ENCODE measurements at regions of chr6 and their contacts with region 1.

Region 1: GRCh38 chr6:128062882-128063603 is 162.2 kb upstream of the THEMIS start:
- DNase-seq: peak; percentile 63 to 67
- H3K4me3 ChIP-seq: no peak overlapping the region
- H3K4me3 Mint-ChIP-seq: peak overlapping the region; percentile 43
- H3K27ac Mint-ChIP-seq: peak overlapping the region; percentile 89
- H3K4me1 ChIP-seq: peaks cover 35% of the 10 kb centered on the region
- H3K4me1 Mint-ChIP-seq: peaks cover 7% of the 10 kb centered on the region
- H3K27me3 ChIP-seq: no peaks in the 10 kb centered on the region
- H3K27me3 Mint-ChIP-seq: no peaks in the 10 kb centered on the region
- CTCF ChIP-seq: no peak

Region 2: DNA sequence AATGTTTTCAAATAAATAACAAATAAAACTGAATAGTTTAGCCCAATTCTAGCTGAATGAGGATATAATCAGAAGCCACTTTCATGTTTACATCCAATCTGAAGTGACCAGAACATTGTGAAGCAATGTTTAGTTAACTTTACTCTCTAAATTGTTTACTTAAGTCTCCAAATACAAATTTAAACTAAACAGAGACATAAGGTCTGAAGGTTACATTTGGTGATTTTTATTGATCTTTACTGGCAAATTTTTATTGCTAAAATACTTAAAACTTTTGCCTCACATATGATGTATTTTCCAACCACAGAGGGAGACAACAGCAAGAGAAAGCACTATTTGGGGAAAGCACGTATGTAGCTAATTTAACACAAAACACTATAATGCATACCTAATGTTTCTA is 55.4 kb before region 1 on chr6:
- CTCF ChIA-PET with region 1: no interaction called
- POLR2A ChIA-PET with region 1: no interaction called
- intact Hi-C with region 1: loop called (anchors 2 kb)
- DNase-seq: no peak
- H3K4me3 ChIP-seq: no peak overlapping the region
- H3K4me3 Mint-ChIP-seq: no peak overlapping the region
- H3K27ac Mint-ChIP-seq: no peak overlapping the region
- H3K4me1 ChIP-seq: no peaks in the 10 kb centered on the region
- H3K4me1 Mint-ChIP-seq: peaks cover 6% of the 10 kb centered on the region
- H3K27me3 ChIP-seq: no peaks in the 10 kb centered on the region
- H3K27me3 Mint-ChIP-seq: no peaks in the 10 kb centered on the region
- CTCF ChIP-seq: no peak

Region 3: DNA sequence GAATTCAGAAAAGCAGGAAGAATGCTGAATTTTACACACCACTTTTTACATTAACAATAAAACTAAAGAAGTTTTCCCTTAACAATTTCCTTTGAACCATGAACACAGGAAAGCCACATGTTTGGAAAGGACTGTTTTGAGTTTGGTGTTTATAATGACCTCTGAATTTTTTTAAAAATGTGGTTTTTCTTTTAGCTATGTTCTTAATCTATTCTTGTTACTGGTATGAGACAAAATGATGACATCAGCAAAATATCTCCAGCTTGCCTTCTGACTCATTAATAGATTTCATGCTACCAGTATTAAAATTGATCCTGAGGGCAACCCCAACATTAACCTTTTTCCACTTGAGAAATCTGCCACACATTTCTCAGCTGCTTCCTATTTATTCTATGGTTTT is 55.4 kb after region 1 on chr6:
- CTCF ChIA-PET with region 1: no interaction called
- POLR2A ChIA-PET with region 1: no interaction called
- intact Hi-C with region 1: no loop called
- DNase-seq: no peak
- H3K4me3 ChIP-seq: no peak overlapping the region
- H3K4me3 Mint-ChIP-seq: no peak overlapping the region
- H3K27ac Mint-ChIP-seq: no peak overlapping the region
- H3K4me1 ChIP-seq: no peaks in the 10 kb centered on the region
- H3K4me1 Mint-ChIP-seq: peaks cover 7% of the 10 kb centered on the region
- H3K27me3 ChIP-seq: no peaks in the 10 kb centered on the region
- H3K27me3 Mint-ChIP-seq: no peaks in the 10 kb centered on the region
- CTCF ChIP-seq: no peak

Region 4: DNA sequence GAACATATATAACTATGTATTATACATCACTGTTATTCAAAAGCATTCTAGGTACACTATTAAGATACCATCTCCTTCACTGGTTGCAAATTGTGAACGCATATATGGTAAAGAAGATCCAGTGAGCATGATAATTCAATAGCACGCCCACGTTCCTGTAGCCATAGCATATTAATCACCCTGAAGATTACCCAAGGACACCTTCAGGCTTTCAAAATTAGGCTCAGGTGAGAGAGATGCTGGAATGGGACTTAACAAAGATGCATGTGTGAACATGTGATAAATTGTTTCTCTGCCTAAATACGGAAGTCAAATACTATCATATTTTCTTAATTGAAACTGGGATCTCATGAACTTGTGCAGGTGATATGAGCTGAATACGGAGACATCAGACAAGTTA is 153.9 kb after region 1 on chr6:
- CTCF ChIA-PET with region 1: no interaction called
- POLR2A ChIA-PET with region 1: no interaction called
- intact Hi-C with region 1: loop called (anchors 1 kb)
- DNase-seq: no peak
- H3K4me3 ChIP-seq: no peak overlapping the region
- H3K4me3 Mint-ChIP-seq: no peak overlapping the region
- H3K27ac Mint-ChIP-seq: no peak overlapping the region
- H3K4me1 ChIP-seq: peaks cover 2% of the 10 kb centered on the region
- H3K4me1 Mint-ChIP-seq: peaks cover 4% of the 10 kb centered on the region
- H3K27me3 ChIP-seq: no peaks in the 10 kb centered on the region
- H3K27me3 Mint-ChIP-seq: no peaks in the 10 kb centered on the region
- CTCF ChIP-seq: no peak

Region 5: DNA sequence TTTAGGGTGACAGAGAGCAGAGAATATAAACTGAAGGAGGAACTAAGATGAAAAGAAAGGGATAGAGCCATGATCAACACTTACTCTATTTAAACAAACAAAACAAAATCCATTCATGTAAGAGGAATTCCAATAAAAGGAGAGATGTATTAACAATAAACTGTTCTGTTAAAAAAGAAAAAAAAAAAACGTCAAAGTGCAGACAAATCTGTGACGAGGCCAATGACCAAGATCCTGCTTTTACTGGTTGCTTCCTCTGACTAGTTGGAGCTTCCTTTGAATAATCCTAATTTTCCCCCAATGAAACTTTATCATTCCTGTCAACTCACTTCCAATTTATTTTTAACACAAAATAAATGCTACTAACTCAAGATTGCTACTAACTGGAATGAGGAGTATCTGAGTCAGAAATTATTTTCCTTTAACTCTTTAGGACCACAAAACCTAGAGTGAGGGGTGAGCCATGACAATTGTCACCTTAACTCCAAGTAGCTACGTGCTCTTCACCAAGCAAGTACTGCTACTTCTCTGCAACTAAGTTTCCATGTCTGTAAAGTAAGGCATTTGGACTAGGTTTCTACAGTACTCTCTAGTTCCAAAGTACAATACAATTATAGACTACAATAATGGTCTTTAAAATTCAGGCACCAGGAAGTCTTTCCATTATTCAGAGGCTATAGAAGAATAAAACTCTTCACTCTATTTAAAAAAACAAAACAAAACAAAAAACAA is 305.3 kb after region 1 on chr6:
- CTCF ChIA-PET with region 1: no interaction called
- POLR2A ChIA-PET with region 1: no interaction called
- intact Hi-C with region 1: loop called (anchors 5 kb)
- DNase-seq: no peak
- H3K4me3 ChIP-seq: no peak overlapping the region
- H3K4me3 Mint-ChIP-seq: peak overlapping the region; percentile 35
- H3K27ac Mint-ChIP-seq: peak overlapping the region; percentile 45
- H3K4me1 ChIP-seq: peaks cover 62% of the 10 kb centered on the region
- H3K4me1 Mint-ChIP-seq: peaks cover 61% of the 10 kb centered on the region
- H3K27me3 ChIP-seq: no peaks in the 10 kb centered on the region
- H3K27me3 Mint-ChIP-seq: no peaks in the 10 kb centered on the region
- CTCF ChIP-seq: no peak

Measured in Caco-2 (cell line).